HepG2 (cell line): ENCODE measurements at regions of chr6 and their contacts with region 1.

Region 1: GRCh38 chr6:158009114-158009891 is 27.6 kb downstream of the SYNJ2 start:
- DNase-seq: no peak
- ATAC-seq: no peak
- H3K4me3 ChIP-seq: no peak overlapping the region
- H3K27ac ChIP-seq: peak overlapping the region; percentile 99
- H3K4me1 ChIP-seq: peaks cover 99% of the 10 kb centered on the region
- H3K27me3 ChIP-seq: no peaks in the 10 kb centered on the region
- CTCF ChIP-seq: no peak
- EP300 ChIP-seq: no peak
- POLR2A ChIP-seq: no peak
- RAD21 ChIP-seq: no peak

Region 2: GRCh38 chr6:157981395-157982296 is 27.7 kb before region 1 on chr6 and contains the start of gene SYNJ2:
- CTCF ChIA-PET with region 1: no interaction called
- POLR2A ChIA-PET with region 1: interaction called, 345 read pairs
- in situ Hi-C with region 1: no loop called
- intact Hi-C with region 1: loop called (anchors 1 kb)
- DNase-seq: peak; percentile 83
- ATAC-seq: peak; percentile 76
- H3K4me3 ChIP-seq: peak within 1 kb of the TSS; percentile 70 to 88 (median 77)
- H3K27ac ChIP-seq: peak within 1 kb of the TSS; percentile 96
- H3K4me1 ChIP-seq: peaks cover 82% of the 10 kb centered on the region
- H3K27me3 ChIP-seq: peaks cover 6 to 9% of the 10 kb centered on the region in 2 experiments; a peak in 4 of 5 replicates
- CTCF ChIP-seq: peak; percentile 79
- EP300 ChIP-seq: peak; percentile 50 to 77
- POLR2A ChIP-seq: peak in 1 of 2 experiments; percentile 55; a peak in 1 of 4 replicates
- RAD21 ChIP-seq: peak; percentile 88
- total RNA-seq, gene SYNJ2: 39.0 and 39.1 TPM in 2 replicates

Region 3: GRCh38 chr6:158020272-158020711 is 11.0 kb after region 1 on chr6:
- CTCF ChIA-PET with region 1: no interaction called
- POLR2A ChIA-PET with region 1: interaction called, 39 read pairs
- in situ Hi-C with region 1: no loop called
- intact Hi-C with region 1: no loop called
- DNase-seq: no peak
- ATAC-seq: no peak
- H3K4me3 ChIP-seq: no peak overlapping the region
- H3K27ac ChIP-seq: peak overlapping the region; percentile 4
- H3K4me1 ChIP-seq: peaks cover 70% of the 10 kb centered on the region
- H3K27me3 ChIP-seq: no peaks in the 10 kb centered on the region
- CTCF ChIP-seq: no peak
- EP300 ChIP-seq: no peak
- POLR2A ChIP-seq: no peak
- RAD21 ChIP-seq: no peak

Region 4: DNA sequence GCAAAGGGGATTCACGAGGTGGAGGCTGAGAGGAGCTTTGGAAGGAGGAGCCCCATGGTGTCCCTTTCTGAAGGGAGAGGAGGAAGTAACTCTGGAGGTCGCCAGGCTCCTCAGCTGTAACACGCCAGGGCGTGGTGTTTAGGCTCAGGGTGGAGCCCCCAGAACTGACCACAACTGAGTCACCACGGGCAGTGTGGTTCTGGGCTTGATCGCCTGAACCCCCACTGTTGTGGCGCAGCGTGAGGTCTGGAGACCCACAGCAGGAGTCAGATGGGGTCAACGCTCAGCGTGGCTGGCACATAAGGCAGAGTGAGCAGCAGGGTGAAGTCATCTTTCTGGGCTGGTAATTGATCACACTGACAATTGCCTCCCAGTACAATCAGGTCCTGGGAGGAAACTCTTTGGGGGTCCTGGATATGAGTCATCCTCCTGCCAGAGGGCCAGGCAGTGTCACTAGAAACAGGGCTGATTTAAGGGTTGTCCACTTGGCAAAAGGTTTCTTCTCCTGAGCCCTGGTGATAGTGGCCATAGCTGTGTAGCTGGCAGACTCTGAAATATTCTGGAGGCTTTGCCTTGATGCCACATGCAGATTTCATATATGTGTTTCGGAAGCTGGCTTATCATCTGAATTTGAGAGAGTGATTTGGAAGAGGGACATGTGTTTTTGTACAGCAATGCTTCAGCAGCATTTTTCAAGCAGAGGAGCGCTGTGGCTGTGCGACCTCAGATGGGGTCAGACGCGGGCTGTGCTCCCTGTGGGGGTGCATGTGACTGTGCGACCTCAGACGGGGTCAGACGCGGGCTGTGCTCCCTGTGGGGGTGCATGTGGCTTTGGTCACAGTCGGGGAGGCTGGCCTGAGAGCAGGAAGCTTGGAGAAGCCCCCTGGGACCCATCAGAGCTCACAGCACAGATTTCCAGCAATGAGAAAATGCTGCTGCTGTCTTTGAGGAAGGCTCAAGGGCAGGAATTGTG is 22.4 kb after region 1 on chr6:
- CTCF ChIA-PET with region 1: no interaction called
- POLR2A ChIA-PET with region 1: interaction called, 75 read pairs
- in situ Hi-C with region 1: no loop called
- intact Hi-C with region 1: loop called (anchors 1 kb)
- DNase-seq: no peak
- ATAC-seq: no peak
- H3K4me3 ChIP-seq: no peak overlapping the region
- H3K27ac ChIP-seq: peak overlapping the region; percentile 25
- H3K4me1 ChIP-seq: peaks cover 66% of the 10 kb centered on the region
- H3K27me3 ChIP-seq: no peaks in the 10 kb centered on the region
- CTCF ChIP-seq: no peak
- EP300 ChIP-seq: no peak
- POLR2A ChIP-seq: peak in 1 of 2 experiments; percentile 29; a peak in 2 of 4 replicates
- RAD21 ChIP-seq: no peak

Region 5: GRCh38 chr6:158072083-158072721 is 62.9 kb after region 1 on chr6:
- CTCF ChIA-PET with region 1: no interaction called
- POLR2A ChIA-PET with region 1: interaction called, 16 read pairs
- in situ Hi-C with region 1: no loop called
- intact Hi-C with region 1: loop called (anchors 2 kb)
- DNase-seq: peak; percentile 71
- ATAC-seq: peak; percentile 77
- H3K4me3 ChIP-seq: no peak overlapping the region
- H3K27ac ChIP-seq: peak overlapping the region; percentile 16
- H3K4me1 ChIP-seq: peaks cover 32% of the 10 kb centered on the region
- H3K27me3 ChIP-seq: no peaks in the 10 kb centered on the region
- CTCF ChIP-seq: peak; percentile 97
- EP300 ChIP-seq: no peak
- POLR2A ChIP-seq: no peak
- RAD21 ChIP-seq: peak; percentile 94